H1 (cell line): ENCODE measurements at regions of chr17 and their contacts with region 1.

Region 1: GRCh38 chr17:75784473-75785015 is at the start of gene UNK:
- DNase-seq: peak; percentile 97 to 99
- H3K4me3 ChIP-seq: peak within 1 kb of the TSS; percentile 73 to 97 (median 92)
- H3K27ac ChIP-seq: peak within 1 kb of the TSS; percentile 100
- H3K4me1 ChIP-seq: peaks cover 0 to 20% (median 7%) of the 10 kb centered on the region in 4 experiments; a peak in 6 of 7 replicates
- H3K27me3 ChIP-seq: no peaks in the 10 kb centered on the region
- CTCF ChIP-seq: no peak
- EP300 ChIP-seq: no peak
- POLR2A ChIP-seq: peak in 1 of 2 experiments; percentile 89; a peak in 2 of 3 replicates
- RAD21 ChIP-seq: no peak
- total RNA-seq, gene UNK: 33.0 and 33.3 TPM in 2 replicates

Region 2: DNA sequence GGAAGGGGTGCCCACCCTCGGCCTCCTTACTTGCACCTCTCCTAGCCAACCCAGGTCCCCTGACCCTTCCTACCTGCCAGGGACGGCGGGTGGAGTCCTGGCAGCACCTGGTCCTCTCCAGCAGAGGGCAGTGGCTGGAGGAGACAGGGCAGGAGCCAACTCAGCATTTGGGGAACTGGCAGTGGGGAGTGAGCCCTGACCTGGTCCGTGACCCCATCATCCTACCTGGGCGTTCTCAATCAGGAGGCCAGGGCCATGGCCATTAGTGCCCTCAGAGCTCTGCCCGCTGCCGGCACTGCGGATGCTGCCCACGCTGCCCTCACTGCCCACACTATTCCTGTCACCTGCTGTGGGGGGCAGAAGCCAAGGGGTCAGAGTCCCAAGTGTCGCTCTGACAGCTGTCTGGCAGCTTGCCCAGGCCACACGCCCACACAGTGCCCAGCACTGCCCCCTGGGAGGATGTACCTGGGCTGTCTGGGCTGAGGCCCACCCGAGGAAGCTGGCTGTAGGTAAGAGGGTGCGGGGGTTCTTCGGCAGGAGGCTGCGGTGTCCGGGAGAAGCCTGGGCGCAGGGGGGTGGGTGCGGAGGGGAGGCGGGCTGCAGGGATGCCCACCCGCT is 280.1 kb before region 1 on chr17:
- CTCF ChIA-PET with region 1: no interaction called
- POLR2A ChIA-PET with region 1: no interaction called
- DNase-seq: peak in 1 of 2 experiments; percentile 78
- H3K4me3 ChIP-seq: no peak overlapping the region
- H3K27ac ChIP-seq: no peak overlapping the region
- H3K4me1 ChIP-seq: peaks cover 0 to 2% (median 0%) of the 10 kb centered on the region in 4 experiments; a peak in 1 of 7 replicates
- H3K27me3 ChIP-seq: no peaks in the 10 kb centered on the region
- CTCF ChIP-seq: peak; percentile 82 to 95 (median 94)
- EP300 ChIP-seq: no peak
- POLR2A ChIP-seq: no peak
- RAD21 ChIP-seq: peak; percentile 54 to 72

Region 3: DNA sequence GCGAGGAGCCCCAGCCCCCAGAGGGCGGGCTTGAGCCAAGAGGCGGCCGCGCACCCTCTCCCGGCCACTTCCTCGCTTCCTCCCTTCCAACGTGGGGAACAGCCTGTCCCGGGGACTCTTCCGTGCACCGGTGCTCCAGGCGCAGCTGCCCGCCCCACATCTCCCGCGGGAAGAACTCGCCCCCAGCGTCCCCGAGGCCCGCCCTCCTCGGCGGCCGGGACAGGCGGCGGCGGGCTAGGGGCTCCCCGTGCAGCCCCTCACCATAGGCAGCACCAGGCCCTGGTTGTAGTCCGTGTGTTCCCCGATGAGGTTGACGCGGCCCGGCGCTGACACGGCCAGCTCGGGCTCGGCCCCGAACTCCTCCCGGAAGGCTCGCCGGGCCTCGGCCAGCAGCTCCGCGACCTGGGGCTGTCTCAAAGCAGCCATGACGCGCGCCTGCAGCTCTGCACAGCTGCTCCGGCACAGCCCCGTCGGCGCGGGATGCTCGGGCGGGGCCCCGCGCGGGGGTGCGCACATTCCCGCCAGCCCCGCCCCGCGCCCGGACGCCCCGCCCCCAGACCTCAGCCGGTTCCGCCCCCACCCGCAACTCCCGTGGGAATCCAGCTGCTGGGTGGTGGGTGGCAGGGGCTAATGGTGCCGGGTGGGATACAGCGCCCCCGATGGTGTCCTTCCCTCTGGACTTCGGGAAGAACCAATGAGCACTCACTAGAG is 19.7 kb before region 1 on chr17 and contains the start of gene GALK1:
- CTCF ChIA-PET with region 1: interaction called, 359 read pairs
- POLR2A ChIA-PET with region 1: interaction called, 425 read pairs
- DNase-seq: peak in 1 of 2 experiments; percentile 82
- H3K4me3 ChIP-seq: peak within 1 kb of the TSS; percentile 50 to 88 (median 62)
- H3K27ac ChIP-seq: no peak within 1 kb of the TSS
- H3K4me1 ChIP-seq: peaks cover 0 to 8% (median 6%) of the 10 kb centered on the region in 4 experiments; a peak in 5 of 7 replicates
- H3K27me3 ChIP-seq: peaks cover 0 to 2% (median 0%) of the 10 kb centered on the region in 4 experiments; a peak in 1 of 7 replicates
- CTCF ChIP-seq: peak; percentile 67 to 74 (median 67)
- EP300 ChIP-seq: no peak
- POLR2A ChIP-seq: no peak
- RAD21 ChIP-seq: peak; percentile 31 to 45
- total RNA-seq, gene GALK1: 31.0 and 34.1 TPM in 2 replicates

Region 4: DNA sequence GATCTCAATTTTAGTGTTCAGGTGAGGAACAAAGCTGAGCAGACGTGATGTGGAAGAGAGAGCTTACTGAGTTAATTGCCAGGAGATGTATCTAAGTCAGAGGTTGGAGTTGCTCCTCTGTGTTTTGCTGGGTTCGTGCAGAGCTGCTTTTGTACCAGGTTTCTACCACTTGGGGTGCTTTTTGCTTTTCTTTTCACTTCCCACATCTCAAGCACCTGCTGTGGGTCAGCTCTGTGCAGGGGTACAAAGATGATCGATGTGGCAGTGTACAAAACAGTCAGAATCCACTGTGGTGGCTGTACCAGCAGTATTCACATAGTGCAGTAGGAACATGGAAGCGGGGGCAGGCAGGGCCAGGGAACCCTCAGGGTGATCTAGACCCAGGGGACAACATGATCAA is 14.9 kb after region 1 on chr17:
- CTCF ChIA-PET with region 1: interaction called, 8 read pairs
- POLR2A ChIA-PET with region 1: interaction called, 52 read pairs
- DNase-seq: no peak
- H3K4me3 ChIP-seq: no peak overlapping the region
- H3K27ac ChIP-seq: no peak overlapping the region
- H3K4me1 ChIP-seq: no peaks in the 10 kb centered on the region
- H3K27me3 ChIP-seq: no peaks in the 10 kb centered on the region
- CTCF ChIP-seq: no peak
- EP300 ChIP-seq: no peak
- POLR2A ChIP-seq: no peak
- RAD21 ChIP-seq: no peak

Region 5: DNA sequence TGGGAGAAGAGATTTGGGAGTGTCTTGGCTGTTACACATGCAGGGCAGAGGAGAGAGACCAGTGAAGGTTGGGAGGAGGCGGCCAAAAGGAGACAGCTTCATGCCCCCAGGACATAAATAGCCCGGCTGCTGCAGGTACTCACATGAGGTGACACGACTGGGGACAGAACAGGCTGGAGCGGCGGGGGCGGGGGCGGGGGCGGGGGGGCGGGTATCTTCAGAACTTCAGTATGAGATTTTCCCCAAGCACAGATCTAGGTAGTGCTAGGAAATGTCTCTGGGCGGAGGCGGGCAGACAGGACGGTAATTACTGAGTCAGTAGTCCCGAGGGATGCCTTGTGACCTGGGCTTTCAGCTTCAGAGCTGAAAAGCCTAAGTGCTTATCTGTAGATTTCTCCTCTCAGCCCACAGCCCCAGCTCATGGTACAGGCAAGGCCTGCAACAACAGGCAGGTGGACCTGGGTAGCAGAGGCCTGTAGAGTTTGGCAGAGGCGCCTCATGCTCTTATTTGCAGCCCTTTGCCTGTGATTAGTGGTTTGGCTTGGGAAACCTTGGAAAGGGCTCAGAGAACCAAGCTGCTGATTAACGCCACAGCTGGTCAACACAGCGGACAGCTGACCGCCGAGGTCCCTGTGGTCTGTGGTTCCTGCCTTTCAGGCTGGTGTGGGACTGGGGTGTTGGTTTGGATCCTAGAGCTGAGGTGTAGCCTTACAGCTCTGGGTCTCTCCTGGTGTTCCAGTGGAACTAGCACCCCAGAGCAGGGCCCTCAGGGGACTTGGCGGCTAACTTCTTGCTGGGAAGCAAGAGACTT is 24.6 kb after region 1 on chr17:
- CTCF ChIA-PET with region 1: interaction called, 5 read pairs
- POLR2A ChIA-PET with region 1: interaction called, 34 read pairs
- DNase-seq: no peak
- H3K4me3 ChIP-seq: no peak overlapping the region
- H3K27ac ChIP-seq: no peak overlapping the region
- H3K4me1 ChIP-seq: no peaks in the 10 kb centered on the region
- H3K27me3 ChIP-seq: no peaks in the 10 kb centered on the region
- CTCF ChIP-seq: no peak
- EP300 ChIP-seq: no peak
- POLR2A ChIP-seq: no peak
- RAD21 ChIP-seq: no peak

Region 6: DNA sequence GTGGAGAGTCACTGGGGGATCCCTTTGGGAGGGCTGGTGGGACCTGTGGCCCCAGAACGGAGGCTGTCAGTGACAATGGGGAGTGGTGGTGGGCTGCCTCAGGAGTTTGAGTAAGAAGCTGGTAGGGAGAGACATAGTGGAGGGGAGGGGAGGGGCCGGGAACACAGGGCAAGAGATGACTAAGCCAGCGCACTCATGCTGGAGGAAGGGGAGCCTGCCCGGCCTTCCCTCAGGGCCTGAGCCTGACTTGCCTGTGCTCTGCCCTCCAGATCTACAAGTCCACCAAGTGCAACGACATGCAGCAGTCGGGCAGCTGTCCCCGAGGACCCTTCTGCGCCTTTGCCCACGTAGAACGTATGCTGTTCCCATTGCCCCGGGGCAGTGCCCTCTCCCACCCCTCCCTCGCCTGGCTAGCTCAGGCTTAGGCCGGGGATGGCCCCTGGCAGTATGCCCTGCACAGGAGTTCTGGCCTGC is 30.4 kb after region 1 on chr17:
- CTCF ChIA-PET with region 1: interaction called, 5 read pairs
- POLR2A ChIA-PET with region 1: interaction called, 17 read pairs
- DNase-seq: no peak
- H3K4me3 ChIP-seq: no peak overlapping the region
- H3K27ac ChIP-seq: no peak overlapping the region
- H3K4me1 ChIP-seq: no peaks in the 10 kb centered on the region
- H3K27me3 ChIP-seq: no peaks in the 10 kb centered on the region
- CTCF ChIP-seq: no peak
- EP300 ChIP-seq: no peak
- POLR2A ChIP-seq: no peak
- RAD21 ChIP-seq: no peak

Region 7: DNA sequence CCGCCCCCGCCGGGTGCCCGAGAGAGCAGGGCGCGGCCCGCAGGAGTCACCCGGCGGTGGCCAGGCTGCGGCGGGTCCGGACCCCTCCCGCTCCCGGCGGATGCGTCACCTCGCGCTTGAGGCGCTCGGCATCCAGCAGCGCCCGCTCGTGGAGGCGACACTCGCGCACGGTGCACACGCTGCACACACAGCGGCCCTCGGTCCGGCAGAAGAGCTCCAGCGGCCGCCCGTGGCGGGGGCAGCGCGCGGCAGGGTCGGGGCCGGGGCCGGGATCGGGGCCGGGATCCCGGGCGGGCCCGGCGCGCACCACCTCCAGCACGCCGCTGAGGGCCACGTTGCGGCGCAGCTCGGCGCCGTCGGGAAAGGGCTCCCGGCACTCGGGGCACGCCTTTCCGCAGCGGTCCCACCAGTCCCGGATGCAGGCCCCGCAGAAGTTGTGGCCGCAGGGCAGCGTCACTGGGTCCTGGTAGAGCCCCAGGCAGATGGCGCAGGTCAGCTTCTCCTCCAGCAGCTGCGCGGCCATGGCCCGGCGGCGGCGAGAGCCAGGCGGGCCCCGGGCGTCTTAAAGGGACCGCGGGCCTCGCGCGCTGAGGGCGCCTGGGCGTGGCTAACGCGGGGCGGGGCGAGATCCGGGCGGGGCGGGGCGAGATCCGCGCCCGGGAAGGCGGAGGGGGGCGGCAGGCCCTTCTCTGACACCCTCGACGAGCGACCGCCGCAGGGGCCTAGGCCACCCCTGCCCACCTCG is 112.0 kb after region 1 on chr17 and contains the start of gene TRIM65:
- CTCF ChIA-PET with region 1: interaction called, 3 read pairs
- POLR2A ChIA-PET with region 1: interaction called, 18 read pairs
- DNase-seq: peak in 1 of 2 experiments; percentile 92
- H3K4me3 ChIP-seq: peak within 1 kb of the TSS; percentile 58 to 96 (median 80)
- H3K27ac ChIP-seq: peak within 1 kb of the TSS; percentile 59; the same call in 1 of the 2 replicates
- H3K4me1 ChIP-seq: peaks cover 4 to 25% (median 13%) of the 10 kb centered on the region in 4 experiments
- H3K27me3 ChIP-seq: no peaks in the 10 kb centered on the region
- CTCF ChIP-seq: no peak
- EP300 ChIP-seq: no peak
- POLR2A ChIP-seq: peak; percentile 88 to 94
- RAD21 ChIP-seq: no peak
- total RNA-seq, gene TRIM65: 47.7 and 48.6 TPM in 2 replicates